ENCODE measurements at regions of chr9 and their contacts with region 1.

Region 1: GRCh38 chr9:130590305-130590704 is 10.9 kb downstream of the FUBP3 start:
- DNase-seq: no peak
- H3K4me3 Mint-ChIP-seq: no peak overlapping the region
- H3K27ac Mint-ChIP-seq: no peak overlapping the region
- H3K4me1 Mint-ChIP-seq: peaks cover 12% of the 10 kb centered on the region
- H3K27me3 Mint-ChIP-seq: no peaks in the 10 kb centered on the region

Region 2: GRCh38 chr9:130570200-130570599 is 20.1 kb before region 1 on chr9:
- CTCF ChIA-PET with region 1: interaction called, 4 read pairs
- intact Hi-C with region 1: loop called (anchors 1 kb)
- DNase-seq: no peak
- H3K4me3 Mint-ChIP-seq: no peak overlapping the region
- H3K27ac Mint-ChIP-seq: no peak overlapping the region
- H3K4me1 Mint-ChIP-seq: no peaks in the 10 kb centered on the region
- H3K27me3 Mint-ChIP-seq: no peaks in the 10 kb centered on the region

Region 3: DNA sequence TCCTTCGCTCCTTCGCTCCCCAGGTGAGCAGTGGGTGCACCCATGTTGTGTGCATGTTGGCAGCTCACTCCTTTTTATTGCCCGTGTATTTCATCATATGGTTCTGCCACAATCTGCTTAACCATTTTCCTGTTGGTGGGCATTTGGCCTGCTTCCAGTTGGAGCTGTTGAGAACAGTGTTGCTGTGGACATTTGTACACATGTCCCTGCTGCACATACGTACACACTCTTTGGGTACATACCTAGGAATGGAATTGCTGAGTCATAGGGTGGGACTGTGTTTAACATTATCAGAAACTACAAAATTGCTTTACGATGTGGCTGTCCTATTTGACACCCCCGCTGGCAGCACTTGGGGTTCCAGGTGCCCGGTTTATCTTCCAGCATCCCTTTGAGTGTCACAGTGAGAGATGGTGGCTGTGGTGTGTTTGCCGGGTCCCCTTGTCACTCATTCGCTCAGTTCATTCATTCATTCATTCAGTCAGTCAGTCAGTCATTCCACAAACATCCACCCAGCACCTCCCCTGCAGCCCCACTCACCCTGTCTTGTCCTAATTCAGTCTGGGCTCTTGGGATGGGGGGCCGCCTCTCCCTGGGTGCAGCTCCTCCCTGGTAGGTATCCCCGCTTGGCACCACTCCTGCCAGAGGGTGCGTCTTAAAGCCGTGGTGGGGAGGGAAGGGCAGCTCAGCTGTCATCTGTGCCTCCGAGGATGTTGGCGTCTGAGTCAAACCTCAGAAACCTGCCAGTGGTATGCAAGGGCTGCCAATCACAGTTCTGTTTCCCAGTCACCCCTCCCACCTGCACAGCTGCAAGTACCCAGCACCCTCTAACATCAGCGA is 356.7 kb after region 1 on chr9:
- CTCF ChIA-PET with region 1: no interaction called
- intact Hi-C with region 1: no loop called
- DNase-seq: no peak
- H3K4me3 Mint-ChIP-seq: no peak overlapping the region
- H3K27ac Mint-ChIP-seq: no peak overlapping the region
- H3K4me1 Mint-ChIP-seq: no peaks in the 10 kb centered on the region
- H3K27me3 Mint-ChIP-seq: peaks cover 30% of the 10 kb centered on the region